ENCODE measurements at regions of chr17 and their contacts with region 1.

Region 1: GRCh38 chr17:42964161-42964932 is at the start of gene AARSD1:
- DNase-seq: peak; percentile 95
- ATAC-seq: peak; percentile 97
- H3K4me3 ChIP-seq: peak within 1 kb of the TSS; percentile 74
- H3K27ac ChIP-seq: peak within 1 kb of the TSS; percentile 81
- H3K4me1 ChIP-seq: peaks cover 4% of the 10 kb centered on the region
- H3K27me3 ChIP-seq: no peaks in the 10 kb centered on the region
- CTCF ChIP-seq: no peak
- POLR2A ChIP-seq: peak; percentile 80
- RAD21 ChIP-seq: peak; percentile 1; the same call in 1 of the 2 replicates
- total RNA-seq, gene AARSD1: 55.0 and 58.9 TPM in 2 replicates

Region 2: GRCh38 chr17:43068570-43069367 is 104.4 kb after region 1 on chr17:
- CTCF ChIA-PET with region 1: no interaction called
- POLR2A ChIA-PET with region 1: no interaction called
- dilution Hi-C with region 1: no loop called
- in situ Hi-C with region 1: loop called (anchors 25 kb)
- intact Hi-C with region 1: no loop called
- DNase-seq: no peak
- ATAC-seq: no peak
- H3K4me3 ChIP-seq: no peak overlapping the region
- H3K27ac ChIP-seq: no peak overlapping the region
- H3K4me1 ChIP-seq: no peaks in the 10 kb centered on the region
- H3K27me3 ChIP-seq: no peaks in the 10 kb centered on the region
- CTCF ChIP-seq: no peak
- POLR2A ChIP-seq: no peak
- RAD21 ChIP-seq: no peak